PC-9 (cell line): ENCODE measurements at regions of chr20 and their contacts with region 1.

Region 1: GRCh38 chr20:64053841-64054661 is 4.6 kb upstream of the SOX18 start:
- DNase-seq: peak in 1 of 2 experiments; percentile 33
- H3K4me3 ChIP-seq: no peak overlapping the region
- H3K27ac ChIP-seq: no peak overlapping the region
- H3K4me1 ChIP-seq: peaks cover 14% of the 10 kb centered on the region
- H3K27me3 ChIP-seq: peaks cover 29% of the 10 kb centered on the region
- CTCF ChIP-seq: peak; percentile 33; the same call in 1 of the 2 replicates

Region 2: DNA sequence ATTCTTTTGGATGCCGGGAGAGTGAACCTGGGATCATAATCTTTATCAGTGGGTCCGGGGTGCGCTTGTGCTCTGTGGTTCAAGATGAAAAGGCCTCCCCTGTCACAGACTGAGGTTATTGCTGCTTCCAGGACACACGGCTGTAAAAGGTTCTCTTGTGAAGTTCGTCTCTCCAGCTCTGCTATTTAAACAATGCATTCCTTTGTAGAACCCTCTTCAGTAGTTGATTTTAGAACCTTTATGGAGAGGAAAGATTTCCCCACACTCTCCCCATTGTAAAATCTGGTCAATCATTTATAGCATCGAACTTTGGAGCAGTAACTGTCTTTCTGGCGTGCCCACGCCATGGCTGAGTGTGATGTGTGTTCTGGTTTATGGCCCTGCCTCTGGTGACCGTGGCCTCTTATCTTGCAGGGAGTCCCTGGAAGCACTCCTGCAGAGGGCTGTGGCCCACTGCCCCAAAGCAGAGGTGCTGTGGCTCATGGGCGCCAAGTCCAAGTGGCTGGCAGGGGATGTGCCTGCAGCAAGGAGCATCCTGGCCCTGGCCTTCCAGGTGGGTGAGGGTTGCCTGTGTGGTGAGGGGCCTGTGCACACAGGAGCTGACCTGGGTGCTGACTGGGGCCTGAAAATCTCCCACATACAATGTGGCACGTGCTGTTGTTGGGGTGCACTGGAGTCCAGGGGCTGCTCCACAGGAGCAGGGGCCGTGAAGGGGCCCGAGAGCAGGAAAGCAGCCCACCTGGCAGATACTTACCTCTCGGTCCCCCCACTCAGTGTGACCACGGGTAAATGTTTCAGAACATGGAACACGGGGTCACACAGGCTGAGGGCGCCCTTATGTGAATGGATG is 29.7 kb before region 1 on chr20:
- CTCF ChIA-PET with region 1: no interaction called
- POLR2A ChIA-PET with region 1: no interaction called
- intact Hi-C with region 1: no loop called
- DNase-seq: no peak
- H3K4me3 ChIP-seq: no peak overlapping the region
- H3K27ac ChIP-seq: no peak overlapping the region
- H3K4me1 ChIP-seq: no peaks in the 10 kb centered on the region
- H3K27me3 ChIP-seq: no peaks in the 10 kb centered on the region
- CTCF ChIP-seq: no peak

Region 3: DNA sequence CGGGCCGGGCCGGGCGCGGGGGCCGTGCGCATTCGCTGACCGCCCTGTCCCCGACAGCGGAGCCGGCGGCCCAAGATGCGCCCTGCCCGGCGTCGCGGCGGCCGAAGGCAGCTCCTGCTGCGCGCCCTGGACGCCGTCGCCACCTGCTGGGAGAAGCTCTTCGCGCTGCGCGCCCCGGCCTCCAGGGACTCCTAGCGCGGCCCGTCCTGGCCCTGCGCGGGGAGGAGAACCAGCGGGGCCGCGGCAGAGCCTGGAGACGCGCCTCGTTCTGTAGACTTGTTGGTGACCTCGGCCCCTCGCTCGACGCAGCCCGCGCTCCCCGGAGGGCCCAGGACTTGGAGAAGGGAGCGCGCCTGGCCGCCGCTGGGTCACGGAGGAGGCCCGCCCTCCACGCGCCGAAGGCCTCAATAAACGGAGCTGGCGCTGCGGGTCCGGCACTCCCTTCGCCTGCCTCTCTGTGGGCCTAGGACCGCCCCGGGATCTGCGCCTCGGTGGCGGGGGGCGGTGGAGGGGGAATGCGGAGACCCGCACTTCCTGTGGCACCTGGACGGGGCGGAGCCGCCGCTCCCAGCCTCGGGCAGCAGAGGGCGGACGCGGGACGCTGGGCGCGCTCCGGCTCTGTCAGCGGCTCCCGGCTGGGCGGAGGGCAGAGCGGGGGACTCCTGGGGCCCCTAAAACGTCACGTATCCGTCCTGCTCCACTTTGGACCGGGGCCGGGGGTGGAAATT is 15.3 kb before region 1 on chr20:
- CTCF ChIA-PET with region 1: interaction called, 6 read pairs
- POLR2A ChIA-PET with region 1: no interaction called
- intact Hi-C with region 1: loop called (anchors 1 kb)
- DNase-seq: peak; percentile 69 to 87
- H3K4me3 ChIP-seq: peak overlapping the region; percentile 96
- H3K27ac ChIP-seq: no peak overlapping the region
- H3K4me1 ChIP-seq: peaks cover 13% of the 10 kb centered on the region; the same call in 1 of the 2 replicates
- H3K27me3 ChIP-seq: peaks cover 20% of the 10 kb centered on the region; the same call in 1 of the 2 replicates
- CTCF ChIP-seq: peak; percentile 86

Region 4: DNA sequence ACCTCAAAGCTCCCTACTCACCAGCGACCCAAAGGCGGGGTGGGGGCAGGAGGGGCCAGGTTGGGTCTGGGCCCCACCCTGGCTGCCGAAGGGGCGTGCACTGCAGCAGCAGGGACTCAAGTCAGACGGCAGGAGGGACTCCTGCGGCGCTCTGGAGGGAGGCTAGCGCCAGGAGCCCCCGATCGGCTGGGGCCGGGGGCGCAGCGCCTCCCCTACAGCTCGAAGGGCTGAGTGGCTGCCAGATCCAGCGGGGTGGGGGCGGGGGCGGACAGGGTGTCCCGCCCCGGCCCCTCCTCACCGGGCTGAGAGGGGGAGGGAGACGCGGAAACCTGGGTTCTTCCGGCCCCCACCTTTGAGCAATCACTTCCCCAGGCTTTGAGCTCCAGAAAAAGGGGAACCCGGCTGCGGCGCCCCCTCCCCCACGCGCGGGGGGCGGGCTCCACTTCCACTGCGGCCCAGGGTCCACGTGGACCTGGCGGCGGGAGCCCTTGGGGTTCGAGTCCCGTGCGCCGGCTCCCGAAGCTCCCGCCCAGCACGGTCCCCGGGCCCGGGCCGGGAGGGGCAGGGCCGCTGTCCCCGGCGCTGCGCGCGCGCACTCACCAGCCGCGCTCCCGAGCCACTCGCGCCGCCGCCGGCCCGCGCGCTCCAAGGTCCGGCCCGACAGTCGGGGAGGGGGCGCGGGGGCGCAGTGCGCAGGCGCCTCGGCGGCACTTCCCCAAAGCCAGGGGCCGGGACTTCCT is 25.4 kb after region 1 on chr20 and contains the start of gene RGS19:
- CTCF ChIA-PET with region 1: interaction called, 12 read pairs
- POLR2A ChIA-PET with region 1: no interaction called
- intact Hi-C with region 1: no loop called
- DNase-seq: peak in 1 of 2 experiments; percentile 88
- H3K4me3 ChIP-seq: peak within 1 kb of the TSS; percentile 94
- H3K27ac ChIP-seq: no peak within 1 kb of the TSS
- H3K4me1 ChIP-seq: peaks cover 14% of the 10 kb centered on the region
- H3K27me3 ChIP-seq: peaks cover 20% of the 10 kb centered on the region
- CTCF ChIP-seq: no peak
- total RNA-seq, gene RGS19: 33.3 and 39.2 TPM in 2 replicates

Region 5: DNA sequence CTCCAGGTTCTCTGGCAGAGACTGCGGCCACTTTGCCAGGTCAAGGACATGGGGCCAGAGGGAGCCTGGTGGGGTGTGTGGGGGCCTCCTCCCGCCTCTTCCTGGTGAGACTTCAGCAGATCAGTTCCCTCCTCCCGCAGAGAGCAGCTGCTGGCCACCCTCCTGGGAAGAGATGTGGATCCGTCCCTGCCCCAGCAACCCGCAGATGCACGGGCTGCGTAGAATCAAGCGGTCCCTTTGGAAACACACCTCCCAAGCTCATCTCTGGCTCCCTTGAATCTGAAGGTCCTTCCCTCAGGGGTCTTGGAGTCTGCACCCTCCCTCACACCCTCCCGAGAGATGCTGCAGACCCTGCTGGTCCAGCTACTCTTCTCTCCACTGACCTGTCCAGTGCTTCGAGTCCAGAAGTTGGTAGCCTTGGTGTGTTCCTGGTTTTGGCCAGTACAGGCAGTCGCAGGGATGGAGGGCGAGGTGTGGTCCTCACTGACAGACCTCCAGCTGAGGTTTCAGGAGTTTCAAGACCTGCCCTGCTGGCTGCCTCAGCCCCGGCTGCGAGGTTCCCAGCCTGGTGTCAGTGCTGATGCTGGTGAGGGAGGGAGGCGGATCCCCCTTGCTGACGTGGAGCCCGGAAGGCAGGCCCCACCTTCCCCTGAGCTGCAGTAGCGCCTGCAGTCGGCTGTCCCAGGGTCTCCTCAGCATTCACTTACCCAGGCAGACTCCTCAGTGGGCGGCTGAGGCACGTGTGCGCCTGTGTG is 53.1 kb after region 1 on chr20 and contains the start of gene NPBWR2:
- CTCF ChIA-PET with region 1: no interaction called
- POLR2A ChIA-PET with region 1: no interaction called
- intact Hi-C with region 1: no loop called
- DNase-seq: peak in 1 of 2 experiments; percentile 32
- H3K4me3 ChIP-seq: no peak within 1 kb of the TSS
- H3K27ac ChIP-seq: no peak within 1 kb of the TSS
- H3K4me1 ChIP-seq: no peaks in the 10 kb centered on the region
- H3K27me3 ChIP-seq: peaks cover 93% of the 10 kb centered on the region
- CTCF ChIP-seq: no peak
- total RNA-seq, gene NPBWR2: not detected in 2 replicates